Common myeloid progenitor, CD34-positive (primary cell): ENCODE measurements at regions of chr6 and their contacts with region 1.

Region 1: GRCh38 chr6:52664186-52664990 is 6.5 kb upstream of the TMEM14A start:
- DNase-seq: peak; percentile 90 to 92 (median 91)
- H3K4me3 ChIP-seq: peak overlapping the region; percentile 74 to 90 (median 80)
- H3K27ac ChIP-seq: peak overlapping the region in 1 of 2 experiments; percentile 44
- H3K4me1 ChIP-seq: peaks cover 5 to 25% (median 16%) of the 10 kb centered on the region in 4 experiments
- H3K27me3 ChIP-seq: no peaks in the 10 kb centered on the region

Region 2: GRCh38 chr6:52399511-52400312 is 264.7 kb before region 1 on chr6:
- CTCF ChIA-PET with region 1: interaction called, 44 read pairs
- POLR2A ChIA-PET with region 1: no interaction called
- DNase-seq: peak; percentile 48 to 60 (median 54)
- H3K4me3 ChIP-seq: no peak overlapping the region
- H3K27ac ChIP-seq: no peak overlapping the region
- H3K4me1 ChIP-seq: peaks cover 14 to 34% (median 31%) of the 10 kb centered on the region in 4 experiments
- H3K27me3 ChIP-seq: no peaks in the 10 kb centered on the region

Region 3: GRCh38 chr6:52419809-52420670 is 244.3 kb before region 1 on chr6 and contains the start of gene EFHC1:
- CTCF ChIA-PET with region 1: interaction called, 66 read pairs
- POLR2A ChIA-PET with region 1: no interaction called
- DNase-seq: peak; percentile 97 to 98 (median 97)
- H3K4me3 ChIP-seq: peak within 1 kb of the TSS; percentile 76 to 99 (median 87)
- H3K27ac ChIP-seq: peak within 1 kb of the TSS; percentile 69 to 91
- H3K4me1 ChIP-seq: peaks cover 12 to 55% (median 29%) of the 10 kb centered on the region in 4 experiments
- H3K27me3 ChIP-seq: no peaks in the 10 kb centered on the region

Region 4: GRCh38 chr6:52635049-52635577 is 29.3 kb before region 1 on chr6:
- CTCF ChIA-PET with region 1: interaction called, 14 read pairs
- POLR2A ChIA-PET with region 1: no interaction called
- DNase-seq: no peak
- H3K4me3 ChIP-seq: no peak overlapping the region
- H3K27ac ChIP-seq: no peak overlapping the region
- H3K4me1 ChIP-seq: peaks cover 0 to 8% (median 3%) of the 10 kb centered on the region in 4 experiments
- H3K27me3 ChIP-seq: no peaks in the 10 kb centered on the region